ENCODE measurements at regions of chr5 and their contacts with region 1.

Region 1: GRCh38 chr5:73591102-73591695 is 25.7 kb downstream of the UTP15 start:
- DNase-seq: no peak
- H3K4me3 ChIP-seq: no peak overlapping the region
- H3K27ac ChIP-seq: no peak overlapping the region
- H3K4me1 ChIP-seq: no peaks in the 10 kb centered on the region
- H3K27me3 ChIP-seq: no peaks in the 10 kb centered on the region
- CTCF ChIP-seq: peak; percentile 81 to 90 (median 89)
- POLR2A ChIP-seq: no peak

Region 2: GRCh38 chr5:73789851-73790281 is 198.7 kb after region 1 on chr5:
- intact Hi-C with region 1: loop called (anchors 2 kb)
- DNase-seq: no peak
- H3K4me3 ChIP-seq: no peak overlapping the region
- H3K27ac ChIP-seq: no peak overlapping the region
- H3K4me1 ChIP-seq: no peaks in the 10 kb centered on the region
- H3K27me3 ChIP-seq: no peaks in the 10 kb centered on the region
- CTCF ChIP-seq: no peak
- POLR2A ChIP-seq: no peak

Region 3: GRCh38 chr5:74684900-74685851 is 1094.0 kb after region 1 on chr5 and contains the start of gene HEXB:
- intact Hi-C with region 1: no loop called
- DNase-seq: no peak
- H3K4me3 ChIP-seq: peak within 1 kb of the TSS; percentile 65 to 79
- H3K27ac ChIP-seq: peak within 1 kb of the TSS; percentile 86
- H3K4me1 ChIP-seq: peaks cover 21% of the 10 kb centered on the region
- H3K27me3 ChIP-seq: no peaks in the 10 kb centered on the region
- CTCF ChIP-seq: no peak
- POLR2A ChIP-seq: peak; percentile 28 to 80
- total RNA-seq, gene HEXB: 118 TPM